ENCODE measurements at regions of chr7 and their contacts with region 1.

Region 1: GRCh38 chr7:45917658-45918057 is 3.4 kb downstream of the IGFBP3 start:
- DNase-seq: peak; percentile 62 to 84
- H3K4me3 ChIP-seq: no peak overlapping the region
- H3K4me3 Mint-ChIP-seq: no peak overlapping the region
- H3K27ac Mint-ChIP-seq: no peak overlapping the region
- H3K4me1 ChIP-seq: peaks cover 5% of the 10 kb centered on the region; the same call in 1 of the 2 replicates
- H3K4me1 Mint-ChIP-seq: no peaks in the 10 kb centered on the region
- H3K27me3 ChIP-seq: no peaks in the 10 kb centered on the region; the same call in none of the 2 replicates
- H3K27me3 Mint-ChIP-seq: peaks cover 23% of the 10 kb centered on the region
- CTCF ChIP-seq: peak; percentile 96

Region 2: DNA sequence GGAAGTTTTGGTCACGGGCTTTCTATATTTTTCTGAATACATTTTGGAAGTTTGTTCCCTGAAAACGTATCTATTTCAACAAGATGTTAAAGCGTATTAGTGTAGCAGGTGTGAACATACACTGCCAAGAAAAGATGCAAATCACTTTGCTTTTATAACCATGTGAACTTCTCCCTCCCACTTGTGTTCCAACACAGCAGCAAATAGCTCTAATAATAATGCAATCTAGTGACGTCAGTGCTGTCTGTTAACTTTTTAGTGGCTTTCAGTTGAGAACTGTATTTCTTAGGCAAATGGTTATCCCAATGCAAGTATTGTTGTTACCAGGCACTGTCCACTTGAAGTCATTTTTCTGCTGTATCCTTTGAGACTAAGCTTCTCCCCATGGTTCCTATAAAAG is 191.8 kb after region 1 on chr7:
- CTCF ChIA-PET with region 1: no interaction called
- POLR2A ChIA-PET with region 1: no interaction called
- intact Hi-C with region 1: loop called (anchors 5 kb)
- DNase-seq: no peak
- H3K4me3 ChIP-seq: no peak overlapping the region
- H3K4me3 Mint-ChIP-seq: no peak overlapping the region
- H3K27ac Mint-ChIP-seq: no peak overlapping the region
- H3K4me1 ChIP-seq: no peaks in the 10 kb centered on the region
- H3K4me1 Mint-ChIP-seq: no peaks in the 10 kb centered on the region
- H3K27me3 ChIP-seq: no peaks in the 10 kb centered on the region
- H3K27me3 Mint-ChIP-seq: peaks cover 3% of the 10 kb centered on the region
- CTCF ChIP-seq: no peak

Measured in Caco-2 (cell line).